ENCODE measurements at regions of chr11 and their contacts with region 1.

Region 1: DNA sequence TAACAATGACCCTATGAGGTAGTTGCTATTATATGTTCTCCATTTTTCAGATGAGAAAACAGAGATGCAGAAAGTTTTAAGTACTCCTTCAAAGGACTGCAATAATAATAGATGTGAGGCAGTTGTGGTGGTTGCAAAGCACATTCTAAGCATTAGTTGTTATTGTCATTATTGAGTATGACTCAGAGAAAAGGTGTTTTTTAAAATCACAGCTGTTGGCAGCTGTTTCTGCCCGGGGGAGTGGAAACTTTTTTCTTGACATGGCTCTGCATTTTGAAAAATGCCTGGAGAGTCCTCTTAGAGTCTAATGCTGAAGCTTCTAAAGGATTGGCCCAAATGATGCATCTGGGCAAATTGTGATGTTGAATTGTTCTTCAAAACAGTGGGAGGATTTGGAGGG is 244.5 kb upstream of the MPPED2 start:
- DNase-seq: no peak
- ATAC-seq: no peak
- H3K4me3 Mint-ChIP-seq: no peak overlapping the region
- H3K27ac Mint-ChIP-seq: no peak overlapping the region
- H3K4me1 Mint-ChIP-seq: no peaks in the 10 kb centered on the region
- H3K27me3 Mint-ChIP-seq: no peaks in the 10 kb centered on the region

Region 2: DNA sequence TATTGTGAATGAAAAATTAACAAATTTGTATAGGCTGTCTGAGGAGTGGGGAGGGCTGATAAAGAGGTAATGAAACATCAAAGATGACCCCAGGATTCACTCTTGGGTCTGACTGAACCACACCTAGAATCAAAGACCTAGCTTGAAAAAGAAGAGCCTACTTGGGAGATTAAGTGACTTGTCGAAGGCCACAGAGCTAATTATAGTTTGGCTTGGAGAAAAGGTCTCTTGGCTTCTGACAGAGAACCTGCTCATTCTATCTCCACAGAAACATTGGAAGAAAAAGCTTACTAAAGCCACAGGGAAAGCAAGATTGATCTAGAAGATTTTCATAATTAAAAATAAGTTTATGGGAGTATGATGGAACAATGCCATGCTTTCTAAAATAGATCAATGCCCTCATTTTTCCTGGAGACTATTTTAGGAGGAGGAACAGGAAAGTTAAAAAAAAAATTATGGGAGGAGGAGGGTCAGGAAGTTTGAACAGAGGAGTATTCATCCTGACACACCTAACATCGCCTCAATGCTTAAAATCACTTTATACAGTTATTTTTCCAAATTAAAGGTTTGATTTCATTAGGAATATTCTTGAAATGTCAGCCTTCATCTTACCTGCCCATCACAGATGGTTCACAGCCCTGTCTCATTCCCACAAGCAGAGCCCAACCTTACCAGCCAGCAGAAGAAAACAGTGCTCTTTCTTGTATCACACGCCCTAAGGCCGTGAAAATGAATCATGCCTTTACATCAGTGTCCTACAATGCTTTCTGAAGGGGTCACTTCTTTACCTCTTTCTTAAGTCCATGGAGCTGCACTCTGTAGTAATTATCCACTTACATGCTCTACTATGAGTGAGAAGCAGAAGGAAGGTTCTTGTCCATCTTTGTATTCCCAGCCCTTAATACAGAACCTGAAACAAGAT is 13.5 kb before region 1 on chr11:
- CTCF ChIA-PET with region 1: no interaction called
- POLR2A ChIA-PET with region 1: interaction called, 4 read pairs
- intact Hi-C with region 1: loop called in 1 of 2 experiments (anchors 1 kb)
- DNase-seq: no peak
- ATAC-seq: no peak
- H3K4me3 Mint-ChIP-seq: no peak overlapping the region
- H3K27ac Mint-ChIP-seq: no peak overlapping the region
- H3K4me1 Mint-ChIP-seq: no peaks in the 10 kb centered on the region
- H3K27me3 Mint-ChIP-seq: no peaks in the 10 kb centered on the region

Region 3: DNA sequence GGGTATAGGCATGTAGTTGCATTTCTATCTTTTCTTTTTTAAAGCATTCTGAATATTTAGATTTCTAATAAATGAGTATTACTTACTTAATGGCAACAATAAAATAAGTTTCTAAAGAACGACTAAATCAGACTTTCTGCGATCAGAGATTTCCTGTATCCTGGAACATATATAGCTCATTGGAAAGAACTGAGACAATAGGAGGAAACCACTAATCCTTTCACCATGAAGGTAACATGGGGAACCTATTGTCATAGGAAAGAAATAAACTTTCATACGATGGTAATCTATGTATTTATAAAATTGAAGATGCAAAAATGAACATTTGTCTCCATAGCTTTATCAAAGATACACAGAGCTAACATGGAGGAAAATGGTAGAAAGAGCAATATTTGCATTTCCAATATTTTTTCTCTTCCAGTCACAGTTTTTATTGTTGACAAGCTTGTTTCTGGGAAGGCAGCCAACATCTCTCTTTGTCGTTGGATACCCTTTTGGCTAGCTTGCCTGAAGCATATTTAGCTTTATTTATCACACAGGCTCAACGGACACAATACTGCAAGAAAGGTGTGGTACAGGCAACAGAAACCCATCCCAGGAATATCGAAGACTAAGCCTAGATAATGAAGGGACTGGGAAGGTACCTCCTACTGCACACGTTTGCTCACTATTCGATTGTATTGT is 48.8 kb after region 1 on chr11:
- CTCF ChIA-PET with region 1: no interaction called
- POLR2A ChIA-PET with region 1: no interaction called
- intact Hi-C with region 1: loop called in 1 of 2 experiments (anchors 5 kb)
- DNase-seq: no peak
- ATAC-seq: no peak
- H3K4me3 Mint-ChIP-seq: no peak overlapping the region
- H3K27ac Mint-ChIP-seq: no peak overlapping the region
- H3K4me1 Mint-ChIP-seq: no peaks in the 10 kb centered on the region
- H3K27me3 Mint-ChIP-seq: peaks cover 2% of the 10 kb centered on the region